GM12878 (cell line): ENCODE measurements at regions of chr9 and their contacts with region 1.

Region 1: DNA sequence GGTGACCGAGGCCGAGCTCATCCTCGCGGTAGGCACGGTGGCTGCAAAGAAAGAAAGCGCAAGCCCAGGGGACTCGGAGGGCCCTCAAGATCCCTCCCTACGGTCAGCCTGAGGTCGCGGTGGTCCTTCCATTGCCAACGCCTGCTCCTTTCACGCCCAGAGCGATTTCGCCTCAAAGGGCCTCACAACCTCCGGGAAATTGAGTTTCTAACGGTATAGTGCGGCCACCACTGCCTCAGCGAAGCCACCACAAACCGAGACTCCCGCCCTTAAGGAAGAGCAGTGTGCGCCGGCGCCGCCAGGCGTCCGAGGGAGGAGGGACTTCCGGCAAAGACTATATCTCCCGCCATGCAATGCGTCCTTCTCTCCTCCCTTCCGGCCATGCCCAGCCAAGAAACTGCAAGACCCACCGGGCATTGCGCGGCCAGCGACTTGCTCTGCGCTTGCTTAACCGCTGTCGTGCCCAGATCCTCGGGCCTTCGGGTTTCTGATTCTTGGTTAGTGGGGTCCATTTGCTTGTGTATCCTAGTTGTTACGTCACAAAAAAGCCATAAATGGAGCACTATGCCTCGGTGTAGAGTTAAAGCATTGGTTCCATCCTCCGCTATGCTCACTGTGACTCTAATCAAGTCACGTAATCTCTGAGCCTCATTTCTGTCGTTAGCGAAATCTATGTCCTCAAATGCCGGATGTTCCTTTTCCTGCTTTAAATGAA is at the start of gene HAUS6:
- DNase-seq: peak; percentile 89
- ATAC-seq: peak; percentile 98
- H3K4me3 ChIP-seq: peak within 1 kb of the TSS; percentile 80
- H3K27ac ChIP-seq: peak within 1 kb of the TSS; percentile 72
- H3K4me1 ChIP-seq: peaks cover 9% of the 10 kb centered on the region; the same call in 1 of the 2 replicates
- H3K27me3 ChIP-seq: no peaks in the 10 kb centered on the region
- CTCF ChIP-seq: peak in 2 of 3 experiments; percentile 10 to 44; a peak in 1 of 6 replicates
- EP300 ChIP-seq: no peak
- POLR2A ChIP-seq: peak; percentile 80
- RAD21 ChIP-seq: no peak
- polyA plus RNA-seq, gene HAUS6: 7.1 to 8.4 TPM

Region 2: DNA sequence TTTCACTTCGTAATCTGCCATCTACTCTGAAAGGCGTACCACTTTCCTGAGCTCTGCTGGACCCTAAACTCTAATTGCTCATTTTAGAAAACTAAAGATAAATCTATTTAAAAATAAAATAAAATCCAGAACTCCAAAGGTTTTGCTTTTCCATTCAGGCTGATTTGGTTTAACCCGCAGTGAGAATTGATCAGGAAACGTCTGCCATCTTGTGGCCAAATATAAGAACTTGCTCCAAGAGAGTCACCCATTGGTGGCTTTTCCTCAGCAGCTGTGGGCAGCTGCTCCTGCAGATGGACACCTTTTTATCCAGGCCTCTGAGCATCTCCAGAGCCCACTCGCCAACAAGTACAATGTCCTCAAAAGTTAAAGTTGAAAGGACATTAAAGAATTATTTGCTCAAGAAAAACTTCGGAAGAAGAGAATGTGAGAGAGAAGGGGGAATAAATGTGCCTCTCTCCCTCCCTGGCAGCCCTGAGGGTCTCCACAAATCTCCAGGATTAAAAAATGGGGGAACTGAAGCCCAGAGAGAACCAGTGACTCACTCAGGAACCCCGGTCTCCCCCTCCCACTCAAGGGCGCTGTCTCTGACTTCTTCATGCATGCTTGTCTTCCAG is 73.8 kb before region 1 on chr9:
- CTCF ChIA-PET with region 1: no interaction called
- POLR2A ChIA-PET with region 1: no interaction called
- RAD21 ChIA-PET with region 1: no interaction called
- SMC1A ChIA-PET with region 1: no interaction called
- in situ Hi-C with region 1: no loop called
- intact Hi-C with region 1: no loop called
- DNase-seq: no peak
- ATAC-seq: peak; percentile 87
- H3K4me3 ChIP-seq: no peak overlapping the region
- H3K27ac ChIP-seq: no peak overlapping the region
- H3K4me1 ChIP-seq: peaks cover 3% of the 10 kb centered on the region; the same call in 1 of the 2 replicates
- H3K27me3 ChIP-seq: no peaks in the 10 kb centered on the region
- CTCF ChIP-seq: peak; percentile 54 to 79 (median 71); a peak in 5 of 6 replicates
- EP300 ChIP-seq: no peak
- POLR2A ChIP-seq: no peak
- RAD21 ChIP-seq: peak; percentile 88

Region 3: GRCh38 chr9:19085295-19085694 is 17.5 kb before region 1 on chr9:
- CTCF ChIA-PET with region 1: interaction called, 10 read pairs
- POLR2A ChIA-PET with region 1: interaction called, 6 read pairs
- RAD21 ChIA-PET with region 1: interaction called, 12 read pairs
- SMC1A ChIA-PET with region 1: interaction called, 5 read pairs
- in situ Hi-C with region 1: no loop called
- intact Hi-C with region 1: no loop called
- DNase-seq: no peak
- ATAC-seq: peak; percentile 88
- H3K4me3 ChIP-seq: no peak overlapping the region
- H3K27ac ChIP-seq: no peak overlapping the region
- H3K4me1 ChIP-seq: no peaks in the 10 kb centered on the region
- H3K27me3 ChIP-seq: no peaks in the 10 kb centered on the region
- CTCF ChIP-seq: peak; percentile 33 to 47 (median 35); a peak in 3 of 6 replicates
- EP300 ChIP-seq: no peak
- POLR2A ChIP-seq: no peak
- RAD21 ChIP-seq: peak; percentile 47

Region 4: DNA sequence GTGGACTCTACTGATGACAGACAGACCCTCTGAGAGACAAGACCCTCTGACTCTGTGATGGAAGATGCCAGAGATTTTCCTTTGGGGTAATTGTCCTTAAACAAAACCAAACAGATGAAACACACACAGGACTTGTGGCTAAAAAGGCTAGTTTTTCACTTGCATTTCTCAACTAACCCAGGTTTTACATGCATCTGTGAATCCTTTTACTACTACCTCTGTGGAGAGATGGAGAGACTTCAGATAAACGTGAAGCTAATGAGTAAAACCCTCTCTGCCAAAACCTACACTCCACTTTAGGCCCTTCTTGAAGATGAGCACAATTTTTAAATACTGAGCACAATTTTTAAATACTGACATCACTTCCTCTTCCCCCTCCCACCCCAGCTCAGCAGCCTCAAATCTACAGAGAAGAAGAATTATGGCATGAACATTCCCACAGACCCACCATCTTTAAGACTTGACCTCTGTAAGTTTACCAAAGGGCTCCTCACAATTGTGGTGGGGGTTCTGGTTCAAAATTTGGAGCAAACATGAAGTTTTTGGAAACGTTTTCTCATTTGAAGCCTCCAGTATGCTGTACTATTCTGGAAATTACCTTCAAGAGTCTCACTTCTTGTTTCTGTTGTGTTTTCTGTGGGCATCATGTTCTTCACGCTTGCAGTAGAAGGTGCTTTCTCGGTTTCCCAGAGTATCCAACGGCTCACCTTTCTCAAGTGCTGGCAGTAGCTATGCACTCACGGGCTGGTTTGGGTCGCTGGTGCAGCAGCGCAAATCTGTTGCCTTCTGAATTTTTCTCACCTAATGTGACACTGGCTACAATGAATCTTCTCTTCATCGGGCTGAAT is 348.7 kb after region 1 on chr9:
- CTCF ChIA-PET with region 1: no interaction called
- POLR2A ChIA-PET with region 1: no interaction called
- RAD21 ChIA-PET with region 1: no interaction called
- SMC1A ChIA-PET with region 1: no interaction called
- in situ Hi-C with region 1: loop called (anchors 10 kb)
- intact Hi-C with region 1: loop called (anchors 2 kb)
- DNase-seq: peak; percentile 71
- ATAC-seq: peak; percentile 94
- H3K4me3 ChIP-seq: peak overlapping the region; percentile 25; the same call in 1 of the 2 replicates
- H3K27ac ChIP-seq: peak overlapping the region; percentile 76
- H3K4me1 ChIP-seq: peaks cover 12% of the 10 kb centered on the region
- H3K27me3 ChIP-seq: no peaks in the 10 kb centered on the region
- CTCF ChIP-seq: no peak
- EP300 ChIP-seq: peak in 1 of 2 experiments; percentile 65; a peak in 2 of 4 replicates
- POLR2A ChIP-seq: peak; percentile 35; the same call in 1 of the 2 replicates
- RAD21 ChIP-seq: no peak